ENCODE measurements at regions of chr3 and their contacts with region 1.

Region 1: DNA sequence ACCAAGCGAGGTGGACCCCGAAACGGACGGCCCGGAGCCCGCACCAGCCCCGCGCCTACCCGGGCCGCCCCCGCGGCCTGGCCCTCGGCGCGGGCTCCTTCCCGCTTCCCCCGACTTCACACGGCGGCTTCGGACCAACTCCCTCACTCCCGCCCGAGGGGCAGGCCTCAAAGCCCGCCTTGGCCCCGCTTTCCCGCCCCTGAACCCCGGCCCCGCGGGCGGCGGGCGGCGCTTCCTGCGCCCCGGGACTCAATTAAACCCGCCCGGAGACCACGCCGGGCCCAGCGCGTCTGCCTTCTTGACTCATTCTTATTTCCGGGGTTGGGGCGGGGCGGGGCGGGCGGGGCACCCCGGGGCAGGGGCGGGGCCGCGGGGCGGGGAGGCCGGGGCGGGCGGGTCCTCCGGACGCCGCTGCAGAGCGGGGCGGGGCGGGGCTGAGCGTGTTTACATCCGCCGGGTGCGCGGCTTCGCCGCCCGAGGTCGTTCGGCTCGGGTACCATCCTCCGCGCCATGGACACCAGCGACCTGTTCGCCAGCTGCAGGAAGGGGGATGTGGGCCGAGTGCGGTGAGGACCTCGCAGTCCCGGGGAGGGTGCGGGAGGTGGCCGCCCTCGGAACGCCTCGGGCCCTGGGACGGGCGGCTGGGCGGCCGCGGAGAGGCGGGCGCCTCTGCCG is at the start of gene ABTB1:
- DNase-seq: peak; percentile 90
- H3K4me3 ChIP-seq: peak within 1 kb of the TSS; percentile 90
- H3K27ac ChIP-seq: peak within 1 kb of the TSS; percentile 51
- H3K4me1 ChIP-seq: peaks cover 24% of the 10 kb centered on the region
- CTCF ChIP-seq: no peak; the same call in 1 of the 2 replicates
- total RNA-seq, gene ABTB1: 4.4 and 9.1 TPM in 2 replicates

Region 2: GRCh38 chr3:127574880-127575878 is 97.5 kb before region 1 on chr3:
- CTCF ChIA-PET with region 1: no interaction called
- POLR2A ChIA-PET with region 1: no interaction called
- intact Hi-C with region 1: loop called (anchors 5 kb)
- DNase-seq: peak; percentile 89
- H3K4me3 ChIP-seq: no peak overlapping the region
- H3K27ac ChIP-seq: no peak overlapping the region
- H3K4me1 ChIP-seq: no peaks in the 10 kb centered on the region
- CTCF ChIP-seq: peak; percentile 94

Region 3: DNA sequence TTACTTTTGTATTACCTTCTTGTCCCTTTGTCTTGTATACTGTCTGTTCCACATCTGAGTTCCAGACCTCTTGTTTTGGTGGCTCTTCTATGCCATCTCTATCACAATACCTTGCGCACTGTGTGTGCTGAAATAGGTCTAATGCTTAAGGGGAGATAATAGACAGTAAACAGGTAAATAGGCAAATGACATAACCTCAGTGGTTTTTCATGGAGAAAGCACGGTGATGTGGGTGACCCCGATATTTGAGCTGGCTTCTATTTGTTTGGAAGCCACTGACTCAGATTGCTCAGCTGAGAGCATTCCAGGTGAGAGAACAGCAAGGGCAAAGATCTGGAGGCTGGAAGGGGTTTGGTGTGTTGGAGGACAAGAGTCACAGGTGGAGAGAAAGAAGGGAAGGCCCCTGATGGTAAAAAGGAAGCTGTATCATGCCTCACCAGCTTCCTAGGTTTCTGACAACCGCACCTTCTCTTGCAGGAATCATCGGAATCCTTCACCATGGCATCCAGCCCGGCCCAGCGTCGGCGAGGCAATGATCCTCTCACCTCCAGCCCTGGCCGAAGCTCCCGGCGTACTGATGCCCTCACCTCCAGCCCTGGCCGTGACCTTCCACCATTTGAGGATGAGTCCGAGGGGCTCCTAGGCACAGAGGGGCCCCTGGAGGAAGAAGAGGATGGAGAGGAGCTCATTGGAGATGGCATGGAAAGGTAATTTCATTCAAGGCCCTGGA is 73.6 kb before region 1 on chr3:
- CTCF ChIA-PET with region 1: no interaction called
- POLR2A ChIA-PET with region 1: interaction called, 5 read pairs
- intact Hi-C with region 1: loop called (anchors 2 kb)
- DNase-seq: peak; percentile 24
- H3K4me3 ChIP-seq: peak overlapping the region; percentile 73
- H3K27ac ChIP-seq: peak overlapping the region; percentile 70
- H3K4me1 ChIP-seq: peaks cover 46% of the 10 kb centered on the region
- CTCF ChIP-seq: no peak

Region 4: DNA sequence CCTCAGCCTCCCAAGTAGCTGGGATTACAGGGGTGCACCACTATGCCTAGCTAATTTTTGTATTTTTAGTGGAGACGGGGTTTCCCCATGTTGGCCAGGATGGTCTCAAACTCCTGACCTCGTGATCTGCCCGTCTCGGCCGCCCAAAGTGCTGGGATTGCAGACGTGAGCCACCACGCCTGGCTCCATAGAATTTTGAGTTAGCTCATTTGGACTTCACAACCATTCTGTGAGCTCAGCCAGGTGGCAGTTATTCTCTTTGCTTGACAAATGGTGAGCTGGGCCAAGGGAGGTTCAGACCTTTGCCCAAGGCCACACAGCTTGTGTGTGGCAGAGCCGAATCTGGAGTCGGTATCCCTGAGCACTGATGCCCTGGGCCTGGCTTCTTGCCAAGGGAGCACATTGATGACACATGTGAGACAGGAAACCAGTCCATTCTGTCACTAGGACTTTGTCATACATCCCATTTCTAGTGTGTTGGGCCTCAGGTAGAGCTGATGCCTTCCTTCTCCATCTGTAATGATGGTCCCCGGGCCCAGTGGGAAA is 26.1 kb before region 1 on chr3:
- CTCF ChIA-PET with region 1: no interaction called
- POLR2A ChIA-PET with region 1: no interaction called
- intact Hi-C with region 1: no loop called
- DNase-seq: no peak
- H3K4me3 ChIP-seq: no peak overlapping the region
- H3K27ac ChIP-seq: no peak overlapping the region
- H3K4me1 ChIP-seq: no peaks in the 10 kb centered on the region
- CTCF ChIP-seq: no peak

Measured in OCI-LY7 (cell line).